IMR-90 (cell line): ENCODE measurements at regions of chr6 and their contacts with region 1.

Region 1: DNA sequence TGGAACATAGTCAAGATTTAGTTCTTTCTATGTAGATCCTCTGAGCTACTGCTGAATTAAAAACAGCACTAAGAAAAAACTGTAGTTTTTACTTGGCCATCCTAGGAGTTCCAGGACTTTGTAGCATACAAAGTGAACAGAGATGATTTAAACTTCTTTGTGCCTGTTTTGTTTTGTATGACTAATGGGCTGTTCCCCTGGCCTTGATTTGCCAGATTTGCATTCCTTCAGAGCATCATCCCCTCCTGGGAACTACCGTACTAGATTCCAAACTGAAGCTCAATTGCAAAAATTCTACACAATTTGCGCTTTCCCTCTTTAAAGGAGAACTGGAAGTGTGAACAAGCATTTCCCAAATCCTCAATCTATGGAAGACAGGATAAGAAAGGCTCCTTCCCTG is 23.1 kb downstream of the ACOT13 start:
- DNase-seq: no peak
- ATAC-seq: peak; percentile 46; the same call in 1 of the 2 replicates
- H3K4me3 ChIP-seq: no peak overlapping the region
- H3K27ac ChIP-seq: no peak overlapping the region
- H3K4me1 ChIP-seq: no peaks in the 10 kb centered on the region
- H3K27me3 ChIP-seq: no peaks in the 10 kb centered on the region
- CTCF ChIP-seq: no peak
- POLR2A ChIP-seq: no peak
- RAD21 ChIP-seq: no peak

Region 2: DNA sequence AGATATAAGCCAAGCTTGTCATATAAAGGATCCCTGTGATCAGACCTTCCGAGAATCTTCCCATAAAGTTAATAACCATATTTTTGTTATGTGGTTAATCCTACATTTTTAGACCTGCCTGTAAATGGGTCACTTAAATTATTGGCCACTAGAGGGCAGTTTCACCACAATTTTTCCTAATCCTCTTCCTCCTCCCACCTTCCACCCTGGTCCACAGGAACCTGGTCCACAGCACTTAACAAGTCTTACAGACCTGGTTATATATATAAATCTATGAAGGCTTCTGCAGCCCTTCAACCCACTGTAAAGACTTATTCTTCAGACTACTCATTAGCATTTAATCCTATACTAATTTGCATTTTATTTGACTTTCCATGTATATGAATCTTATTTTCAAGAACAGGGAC is 258.9 kb before region 1 on chr6:
- CTCF ChIA-PET with region 1: no interaction called
- POLR2A ChIA-PET with region 1: no interaction called
- dilution Hi-C with region 1: no loop called
- in situ Hi-C with region 1: loop called (anchors 10 kb)
- intact Hi-C with region 1: loop called (anchors 1 kb)
- DNase-seq: peak; percentile 54
- ATAC-seq: peak; percentile 67
- H3K4me3 ChIP-seq: no peak overlapping the region
- H3K27ac ChIP-seq: no peak overlapping the region
- H3K4me1 ChIP-seq: peaks cover 3% of the 10 kb centered on the region; the same call in 1 of the 2 replicates
- H3K27me3 ChIP-seq: no peaks in the 10 kb centered on the region
- CTCF ChIP-seq: peak; percentile 63
- POLR2A ChIP-seq: no peak
- RAD21 ChIP-seq: peak; percentile 54

Region 3: DNA sequence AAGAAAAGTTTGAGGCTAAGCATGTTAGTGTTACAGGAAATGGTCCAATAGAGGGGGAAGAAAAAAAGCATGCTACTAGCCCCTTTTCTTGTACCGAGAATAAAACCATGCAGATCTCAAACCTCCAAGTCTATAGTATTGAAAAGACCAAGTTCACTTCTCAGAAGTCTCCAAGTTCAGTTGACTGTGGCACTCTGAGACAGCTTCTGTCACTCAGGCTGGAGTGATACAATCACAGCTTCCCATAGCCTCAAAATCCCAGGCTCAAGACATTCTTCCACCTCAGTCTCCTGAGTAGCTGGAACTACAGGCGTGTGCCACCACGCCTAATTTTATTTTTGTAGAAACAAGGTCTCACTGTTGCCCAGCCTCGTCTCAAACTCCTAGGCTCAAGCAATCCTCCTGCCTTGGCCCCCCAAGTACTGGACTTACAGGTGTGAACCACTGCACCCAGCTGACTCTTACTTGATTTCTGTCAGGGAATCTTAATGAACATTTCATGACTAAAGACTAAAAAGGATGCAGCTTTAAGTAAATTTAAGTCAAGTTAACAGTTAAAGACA is 12.8 kb after region 1 on chr6:
- CTCF ChIA-PET with region 1: no interaction called
- POLR2A ChIA-PET with region 1: no interaction called
- dilution Hi-C with region 1: no loop called
- in situ Hi-C with region 1: no loop called
- intact Hi-C with region 1: no loop called
- DNase-seq: no peak
- ATAC-seq: no peak
- H3K4me3 ChIP-seq: no peak overlapping the region
- H3K27ac ChIP-seq: no peak overlapping the region
- H3K4me1 ChIP-seq: no peaks in the 10 kb centered on the region
- H3K27me3 ChIP-seq: no peaks in the 10 kb centered on the region
- CTCF ChIP-seq: no peak
- POLR2A ChIP-seq: no peak
- RAD21 ChIP-seq: no peak